MCF 10A (cell line): ENCODE measurements at regions of chr12 and their contacts with region 1.

Region 1: DNA sequence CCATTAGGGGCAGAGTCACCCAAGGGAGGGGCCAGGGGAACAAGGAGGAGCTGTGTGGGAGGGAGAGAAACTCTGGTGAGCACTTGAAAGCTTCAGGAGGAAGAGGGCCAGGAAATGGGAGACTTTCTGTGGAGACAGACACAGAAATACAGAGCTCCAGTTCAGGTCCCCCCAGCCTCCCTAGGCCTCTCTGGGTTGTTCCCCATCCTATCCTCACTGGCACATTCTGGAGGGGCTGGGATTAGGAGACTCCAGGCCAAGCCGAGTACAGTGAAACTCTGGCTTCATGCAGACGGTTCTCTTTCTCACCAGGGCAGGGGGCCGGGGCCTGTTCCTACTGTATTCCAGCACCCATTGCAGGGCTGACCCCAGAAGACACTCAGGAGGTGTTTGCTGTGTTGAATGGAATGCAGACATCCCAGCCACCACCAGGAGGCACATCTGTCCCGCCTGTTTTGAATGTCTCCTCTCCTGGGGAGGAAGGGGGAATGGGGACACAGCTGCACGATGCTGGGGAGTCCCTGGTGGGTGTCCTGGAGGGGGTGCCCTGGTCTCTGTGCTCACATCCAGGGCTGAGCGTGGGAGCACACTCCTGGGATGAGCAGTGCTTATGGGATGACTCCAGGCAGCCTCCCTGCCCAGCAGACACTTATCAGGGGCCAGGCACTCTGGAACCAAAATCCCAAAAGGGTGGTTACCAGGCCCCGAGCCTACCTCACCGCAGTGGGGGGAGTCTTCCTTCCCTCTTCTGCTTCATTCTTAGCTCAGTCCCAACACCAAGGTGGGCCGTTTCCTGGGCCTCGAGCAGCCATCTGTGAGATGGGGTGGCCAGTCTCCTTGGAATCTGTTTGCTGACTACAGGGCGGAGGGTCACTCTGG is 5.5 kb upstream of the KRT84 start:
- DNase-seq: peak; percentile 67
- H3K4me3 Mint-ChIP-seq: no peak overlapping the region
- H3K27ac Mint-ChIP-seq: no peak overlapping the region
- H3K4me1 Mint-ChIP-seq: peaks cover 24% of the 10 kb centered on the region
- H3K27me3 Mint-ChIP-seq: no peaks in the 10 kb centered on the region
- CTCF ChIP-seq: peak; percentile 86

Region 2: DNA sequence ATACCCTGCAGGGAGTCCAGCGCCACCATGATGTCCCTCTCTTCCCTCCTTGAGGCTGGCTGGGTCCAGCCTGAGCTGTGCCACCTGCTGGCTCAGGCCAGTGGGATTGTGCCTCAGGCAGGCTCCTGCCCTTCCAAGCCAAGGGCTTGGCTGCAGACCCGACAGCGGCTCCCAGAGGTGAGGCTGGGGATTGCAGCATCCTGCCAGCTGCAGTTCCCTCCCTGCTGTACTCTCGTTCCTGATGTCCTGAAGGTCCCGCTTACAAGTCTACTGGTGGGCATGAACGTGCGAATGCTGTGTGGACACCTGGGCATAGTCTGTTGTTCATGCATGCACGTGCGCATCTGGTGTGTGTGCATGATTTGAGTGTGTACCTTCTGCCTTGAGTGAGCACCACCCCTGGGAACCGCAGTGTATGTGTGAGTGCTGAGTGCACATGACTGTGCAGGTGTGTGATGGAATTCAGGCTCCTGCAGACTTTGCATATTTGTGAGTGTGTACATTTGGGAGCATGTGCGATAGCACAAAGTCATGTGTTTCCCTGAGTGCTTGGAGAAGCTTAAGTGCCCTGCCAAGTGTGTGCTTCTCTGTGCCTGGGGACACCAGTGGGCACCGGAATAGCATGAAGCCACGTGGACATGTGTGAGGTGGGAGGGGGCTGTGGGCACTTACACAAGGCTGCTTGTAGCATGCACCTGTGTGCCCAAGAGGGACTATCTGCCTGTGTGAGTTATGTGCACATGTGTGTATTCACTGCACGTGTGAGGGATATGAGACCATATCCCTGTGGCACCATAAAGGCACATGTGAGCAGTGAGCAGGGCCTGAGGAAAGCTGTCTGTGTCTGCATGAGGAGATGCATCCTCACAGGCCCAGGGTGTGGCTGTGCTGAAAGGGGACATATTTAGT is 177.2 kb before region 1 on chr12:
- CTCF ChIA-PET with region 1: no interaction called
- POLR2A ChIA-PET with region 1: no interaction called
- intact Hi-C with region 1: no loop called
- DNase-seq: peak; percentile 85
- H3K4me3 Mint-ChIP-seq: no peak overlapping the region
- H3K27ac Mint-ChIP-seq: no peak overlapping the region
- H3K4me1 Mint-ChIP-seq: peaks cover 71% of the 10 kb centered on the region
- H3K27me3 Mint-ChIP-seq: no peaks in the 10 kb centered on the region
- CTCF ChIP-seq: peak; percentile 95

Region 3: GRCh38 chr12:52380271-52380694 is 10.7 kb before region 1 on chr12:
- CTCF ChIA-PET with region 1: interaction called, 10 read pairs
- POLR2A ChIA-PET with region 1: no interaction called
- intact Hi-C with region 1: no loop called
- DNase-seq: peak; percentile 59
- H3K4me3 Mint-ChIP-seq: no peak overlapping the region
- H3K27ac Mint-ChIP-seq: no peak overlapping the region
- H3K4me1 Mint-ChIP-seq: no peaks in the 10 kb centered on the region
- H3K27me3 Mint-ChIP-seq: no peaks in the 10 kb centered on the region
- CTCF ChIP-seq: peak; percentile 59

Region 4: DNA sequence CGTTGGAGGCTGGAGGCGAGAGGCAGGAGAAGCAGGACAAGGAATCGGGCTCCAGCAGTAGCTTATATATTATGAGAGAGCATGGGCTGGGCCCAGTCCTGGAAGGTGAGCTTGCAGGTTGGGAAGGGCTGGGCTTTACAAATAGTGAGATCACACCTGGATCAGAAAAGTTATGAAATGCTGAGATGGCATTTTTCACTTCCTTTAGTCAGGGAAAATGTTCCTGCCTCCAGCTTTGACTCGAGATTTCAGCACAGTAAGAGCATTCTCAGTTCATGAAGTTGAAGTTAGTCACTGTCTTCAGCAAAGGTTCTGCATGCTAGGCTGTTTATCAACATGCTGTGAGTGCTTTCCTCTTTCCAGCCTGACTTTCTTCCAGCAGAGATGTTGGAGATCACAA is 82.8 kb after region 1 on chr12 and contains the start of gene KRT6C:
- CTCF ChIA-PET with region 1: interaction called, 11 read pairs
- POLR2A ChIA-PET with region 1: interaction called, 4 read pairs
- intact Hi-C with region 1: no loop called
- DNase-seq: peak; percentile 43
- H3K4me3 Mint-ChIP-seq: no peak within 1 kb of the TSS
- H3K27ac Mint-ChIP-seq: no peak within 1 kb of the TSS
- H3K4me1 Mint-ChIP-seq: no peaks in the 10 kb centered on the region
- H3K27me3 Mint-ChIP-seq: no peaks in the 10 kb centered on the region
- CTCF ChIP-seq: no peak
- total RNA-seq, gene KRT6C: 0.19 and 0.44 TPM in 2 replicates

Region 5: DNA sequence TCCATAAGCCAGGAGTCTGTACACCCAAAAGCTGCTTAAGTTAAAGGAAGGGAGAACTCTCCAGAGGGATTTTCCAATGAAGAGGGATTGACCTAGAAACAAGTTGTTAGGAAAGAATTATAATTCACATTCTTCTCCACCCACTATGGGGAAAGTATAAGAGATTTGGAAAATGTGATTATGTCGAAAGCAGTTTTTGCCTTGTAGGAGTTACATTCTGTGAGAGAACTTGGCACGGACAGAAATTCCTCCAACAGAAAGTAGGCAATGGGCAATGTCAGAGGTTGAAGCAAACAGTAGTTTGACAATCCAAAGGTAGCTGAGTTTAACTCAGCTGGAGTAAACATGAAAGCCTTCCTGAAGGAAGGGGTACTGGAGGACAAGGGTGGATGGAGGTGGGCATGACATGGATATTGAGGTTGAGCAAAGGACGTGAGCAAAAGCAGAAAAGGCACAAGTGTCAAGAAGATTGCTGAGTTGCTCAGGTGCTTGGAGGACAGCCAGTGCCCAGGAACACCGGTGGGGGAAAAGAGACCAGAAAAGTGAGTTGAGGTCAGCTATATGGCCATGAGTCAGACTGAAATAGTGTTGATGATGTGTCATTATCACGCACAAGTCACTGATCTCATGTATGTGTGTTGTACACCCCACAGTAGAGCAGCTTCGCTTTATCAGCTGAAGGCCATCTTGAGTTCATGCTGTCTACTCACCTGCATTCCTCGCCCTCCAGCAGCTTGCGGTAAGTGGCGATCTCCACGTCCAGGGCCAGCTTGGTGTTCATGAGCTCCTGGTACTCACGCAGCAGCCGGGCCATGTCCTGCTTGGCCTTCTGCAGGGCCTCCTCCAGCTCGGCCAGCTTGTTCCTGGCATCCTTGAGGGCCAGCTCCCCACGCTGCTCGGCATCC is 125.2 kb after region 1 on chr12:
- CTCF ChIA-PET with region 1: interaction called, 7 read pairs
- POLR2A ChIA-PET with region 1: interaction called, 15 read pairs
- intact Hi-C with region 1: no loop called
- DNase-seq: peak; percentile 43
- H3K4me3 Mint-ChIP-seq: peak overlapping the region; percentile 80
- H3K27ac Mint-ChIP-seq: peak overlapping the region; percentile 12
- H3K4me1 Mint-ChIP-seq: peaks cover 30% of the 10 kb centered on the region
- H3K27me3 Mint-ChIP-seq: no peaks in the 10 kb centered on the region
- CTCF ChIP-seq: no peak

Region 6: DNA sequence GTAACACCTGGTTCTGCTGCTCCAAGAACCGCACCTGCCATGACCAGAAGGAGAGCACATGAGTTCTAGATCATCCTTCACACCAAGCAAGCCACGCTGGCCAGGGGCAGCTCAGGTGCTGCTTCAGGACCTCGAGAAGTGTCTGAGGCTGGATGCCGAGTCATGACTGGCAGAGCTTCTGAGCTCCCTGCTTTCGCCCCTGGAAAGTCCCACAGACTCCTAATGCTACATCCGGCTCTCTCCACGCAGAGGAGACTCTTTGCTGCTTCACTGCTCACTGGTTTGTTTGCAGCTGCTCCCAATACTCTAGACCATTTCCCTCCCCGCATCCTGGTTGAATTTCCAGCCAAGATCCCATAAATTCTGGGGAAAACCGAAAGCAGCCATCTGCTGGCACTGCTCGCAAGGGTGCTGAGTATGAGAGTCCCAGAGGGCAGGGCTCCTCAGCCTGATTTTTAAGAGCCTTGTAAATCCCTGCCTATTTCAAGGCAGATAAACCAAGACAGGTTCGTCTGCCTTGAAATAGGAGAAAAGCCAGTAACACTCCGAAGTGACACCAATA is 259.6 kb after region 1 on chr12:
- CTCF ChIA-PET with region 1: no interaction called
- POLR2A ChIA-PET with region 1: no interaction called
- intact Hi-C with region 1: no loop called
- DNase-seq: no peak
- H3K4me3 Mint-ChIP-seq: no peak overlapping the region
- H3K27ac Mint-ChIP-seq: no peak overlapping the region
- H3K4me1 Mint-ChIP-seq: peaks cover 4% of the 10 kb centered on the region
- H3K27me3 Mint-ChIP-seq: peaks cover 50% of the 10 kb centered on the region
- CTCF ChIP-seq: no peak

Region 7: GRCh38 chr12:52870351-52871290 is 479.6 kb after region 1 on chr12:
- CTCF ChIA-PET with region 1: interaction called, 6 read pairs
- POLR2A ChIA-PET with region 1: interaction called, 3 read pairs
- intact Hi-C with region 1: loop called (anchors 1 kb)
- DNase-seq: peak; percentile 84
- H3K4me3 Mint-ChIP-seq: peak overlapping the region; percentile 14
- H3K27ac Mint-ChIP-seq: peak overlapping the region; percentile 90
- H3K4me1 Mint-ChIP-seq: peaks cover 77% of the 10 kb centered on the region
- H3K27me3 Mint-ChIP-seq: no peaks in the 10 kb centered on the region
- CTCF ChIP-seq: peak; percentile 95